Stomach (tissue), 19 donors: ENCODE measurements at regions of chr10 and their contacts with region 1.

Region 1: GRCh38 chr10:84264611-84265141 is 19.8 kb downstream of the RGR start:
- DNase-seq: peak; percentile 74 to 84
- H3K4me3 ChIP-seq: no peak overlapping the region
- H3K27ac ChIP-seq: no peak overlapping the region
- H3K4me1 ChIP-seq: peaks cover 0 to 6% (median 5%) of the 10 kb centered on the region in 4 donors
- H3K27me3 ChIP-seq: peaks cover 0 to 30% (median 0%) of the 10 kb centered on the region in 3 donors
- CTCF ChIP-seq: peak in 5 of 7 experiments; percentile 77 to 94 (median 91)
- EP300 ChIP-seq: no peak
- POLR2A ChIP-seq: no peak

Region 2: GRCh38 chr10:84352251-84352842 is 87.7 kb after region 1 on chr10:
- intact Hi-C with region 1: loop called (anchors 10 kb)
- DNase-seq: peak; percentile 65 to 72
- H3K4me3 ChIP-seq: no peak overlapping the region
- H3K27ac ChIP-seq: no peak overlapping the region
- H3K4me1 ChIP-seq: peaks cover 5 to 72% (median 39%) of the 10 kb centered on the region in 4 donors
- H3K27me3 ChIP-seq: no peaks in the 10 kb centered on the region
- CTCF ChIP-seq: peak in 5 of 7 experiments; percentile 50 to 69 (median 51)
- EP300 ChIP-seq: no peak
- POLR2A ChIP-seq: no peak

Region 3: DNA sequence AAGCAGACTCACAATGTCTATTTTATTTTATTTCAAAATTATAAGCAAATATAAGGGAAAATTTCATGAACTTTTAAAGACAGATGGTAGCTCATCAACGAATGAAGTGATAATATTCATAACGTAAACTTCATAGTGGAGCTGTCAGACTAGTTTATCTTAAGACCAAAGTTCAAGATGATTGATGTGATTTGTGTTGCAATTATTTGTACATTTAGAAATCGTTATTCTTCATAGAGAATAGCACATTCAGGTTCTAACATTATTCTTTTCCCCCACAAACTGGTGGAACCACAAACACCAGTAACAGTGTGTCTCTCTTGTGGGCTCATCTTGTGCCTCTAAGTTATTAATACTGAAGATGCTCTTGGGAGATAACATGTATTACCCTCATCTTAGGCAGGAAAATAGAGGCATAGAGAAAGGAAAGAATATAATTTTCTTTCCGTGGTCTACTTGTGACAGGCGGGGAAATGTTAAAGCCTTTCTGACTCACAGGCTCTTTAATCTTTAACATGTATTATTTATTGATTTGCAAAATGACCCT is 100.7 kb after region 1 on chr10:
- intact Hi-C with region 1: no loop called
- DNase-seq: no peak
- H3K4me3 ChIP-seq: no peak overlapping the region
- H3K27ac ChIP-seq: no peak overlapping the region
- H3K4me1 ChIP-seq: peaks cover 4 to 51% (median 24%) of the 10 kb centered on the region in 4 donors
- H3K27me3 ChIP-seq: no peaks in the 10 kb centered on the region
- CTCF ChIP-seq: no peak
- EP300 ChIP-seq: no peak
- POLR2A ChIP-seq: no peak

Region 4: GRCh38 chr10:84537447-84537931 is 272.8 kb after region 1 on chr10:
- intact Hi-C with region 1: loop called (anchors 5 kb)
- DNase-seq: peak; percentile 59 to 85
- H3K4me3 ChIP-seq: no peak overlapping the region
- H3K27ac ChIP-seq: no peak overlapping the region
- H3K4me1 ChIP-seq: peaks cover 6 to 13% (median 11%) of the 10 kb centered on the region in 4 donors
- H3K27me3 ChIP-seq: peaks cover 0 to 40% (median 0%) of the 10 kb centered on the region in 3 donors
- CTCF ChIP-seq: peak in 5 of 7 experiments; percentile 43 to 88 (median 82)
- EP300 ChIP-seq: no peak
- POLR2A ChIP-seq: no peak